ENCODE measurements at regions of chr2 and their contacts with region 1.

Region 1: GRCh38 chr2:207156451-207157161 is 9.1 kb downstream of the KLF7 start:
- DNase-seq: no peak
- ATAC-seq: no peak
- H3K4me3 Mint-ChIP-seq: no peak overlapping the region
- H3K27ac Mint-ChIP-seq: peak overlapping the region; percentile 22
- H3K4me1 Mint-ChIP-seq: peaks cover 73% of the 10 kb centered on the region
- H3K27me3 Mint-ChIP-seq: no peaks in the 10 kb centered on the region
- CTCF ChIP-seq: no peak

Region 2: GRCh38 chr2:207286106-207286505 is 129.5 kb after region 1 on chr2:
- CTCF ChIA-PET with region 1: no interaction called
- POLR2A ChIA-PET with region 1: interaction called, 20 read pairs
- intact Hi-C with region 1: no loop called
- DNase-seq: no peak
- ATAC-seq: no peak
- H3K4me3 Mint-ChIP-seq: no peak overlapping the region
- H3K27ac Mint-ChIP-seq: no peak overlapping the region
- H3K4me1 Mint-ChIP-seq: peaks cover 11% of the 10 kb centered on the region
- H3K27me3 Mint-ChIP-seq: peaks cover 2% of the 10 kb centered on the region
- CTCF ChIP-seq: no peak